RWPE1 (cell line): ENCODE measurements at regions of chr1 and their contacts with region 1.

Region 1: GRCh38 chr1:167819849-167820683 is 93.9 kb downstream of the ADCY10 start:
- DNase-seq: peak; percentile 80
- H3K27ac ChIP-seq: peak overlapping the region; percentile 95
- CTCF ChIP-seq: no peak

Region 2: DNA sequence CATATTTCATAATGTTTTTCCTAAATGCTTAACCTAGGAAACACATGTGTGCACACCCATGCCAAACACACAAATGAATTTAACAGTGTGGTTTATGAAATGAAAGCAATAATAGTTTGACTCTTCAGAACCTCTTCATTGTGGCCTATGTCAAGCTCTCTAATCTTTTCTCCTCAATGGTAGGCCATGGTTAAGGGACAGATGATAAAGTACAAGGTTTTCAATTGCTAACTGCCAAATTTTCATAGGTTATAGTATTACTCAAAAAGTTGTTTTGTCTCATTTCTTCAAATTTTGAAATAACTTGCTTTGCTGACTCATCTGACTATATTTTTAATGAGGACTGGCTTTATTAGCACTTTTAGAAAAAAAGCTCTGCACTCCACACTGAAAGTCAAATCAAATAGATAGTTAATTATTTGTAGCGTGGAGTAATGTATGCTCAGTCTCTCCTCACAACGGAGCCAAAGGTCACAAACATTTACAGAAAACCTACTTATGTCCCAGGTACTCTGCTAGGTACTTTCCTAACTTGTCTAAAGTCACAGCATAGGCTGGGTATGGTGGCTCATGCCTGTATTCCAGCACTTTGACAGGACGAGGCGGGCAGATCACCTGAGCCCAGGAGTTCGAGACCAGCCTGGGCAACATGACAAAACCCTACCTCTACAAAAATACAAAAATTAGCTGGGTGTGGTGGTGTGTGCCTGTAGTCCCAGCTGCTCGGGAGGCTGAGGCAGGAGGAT is 96.9 kb after region 1 on chr1:
- CTCF ChIA-PET with region 1: no interaction called
- POLR2A ChIA-PET with region 1: interaction called, 11 read pairs
- DNase-seq: no peak
- H3K27ac ChIP-seq: no peak overlapping the region
- CTCF ChIP-seq: no peak